ENCODE measurements at regions of chr6 and their contacts with region 1.

Region 1: DNA sequence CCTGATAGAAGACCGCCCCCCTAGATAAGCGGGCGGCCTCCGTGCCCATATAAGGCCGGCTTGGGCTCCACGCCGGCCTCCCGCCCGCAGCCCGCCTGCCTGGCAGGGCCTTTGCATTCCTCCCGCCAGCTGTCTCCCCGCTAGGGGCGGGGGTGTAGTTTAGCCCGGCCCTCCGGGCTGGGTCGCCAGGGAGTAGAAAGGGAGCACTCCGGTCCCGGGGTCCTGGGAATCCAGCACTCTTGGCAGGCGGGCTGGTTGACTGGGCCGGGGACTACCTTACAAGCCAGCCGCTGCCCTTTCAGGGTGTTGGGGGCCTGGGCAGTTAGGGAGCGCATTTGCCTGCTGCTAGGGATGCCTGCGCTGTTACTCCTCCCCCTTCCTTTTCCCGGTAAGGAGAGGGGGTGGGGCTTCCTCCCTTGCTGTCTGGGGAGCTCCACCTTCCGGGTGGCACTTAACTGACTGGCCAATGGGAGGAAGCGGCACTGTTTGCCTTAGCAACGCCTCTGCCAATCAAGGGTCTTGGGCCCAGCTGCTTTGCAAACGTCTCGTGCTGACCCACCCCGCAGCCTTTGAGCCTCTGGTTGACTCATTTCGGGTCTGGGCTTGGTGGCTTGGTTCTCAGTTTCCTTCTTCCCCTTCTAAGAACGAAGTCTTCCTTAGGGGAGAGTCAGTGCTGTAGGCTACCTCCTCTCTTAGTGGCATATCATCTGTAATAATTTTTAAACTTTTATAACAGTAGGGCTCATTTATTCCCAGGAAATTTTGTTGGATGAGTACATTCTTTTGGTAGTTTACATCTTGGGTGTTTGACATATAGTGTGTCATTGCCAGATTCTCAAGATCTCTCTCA is 3.4 kb downstream of the SRF start:
- DNase-seq: peak; percentile 88 to 99 (median 98)
- H3K4me3 ChIP-seq: peak overlapping the region; percentile 29 to 98 (median 81)
- H3K27ac ChIP-seq: peak overlapping the region; percentile 50 to 98 (median 90)
- H3K27me3 ChIP-seq: no peaks in the 10 kb centered on the region
- CTCF ChIP-seq: peak in 50 of 56 donors; percentile 8 to 67 (median 42)

Region 2: DNA sequence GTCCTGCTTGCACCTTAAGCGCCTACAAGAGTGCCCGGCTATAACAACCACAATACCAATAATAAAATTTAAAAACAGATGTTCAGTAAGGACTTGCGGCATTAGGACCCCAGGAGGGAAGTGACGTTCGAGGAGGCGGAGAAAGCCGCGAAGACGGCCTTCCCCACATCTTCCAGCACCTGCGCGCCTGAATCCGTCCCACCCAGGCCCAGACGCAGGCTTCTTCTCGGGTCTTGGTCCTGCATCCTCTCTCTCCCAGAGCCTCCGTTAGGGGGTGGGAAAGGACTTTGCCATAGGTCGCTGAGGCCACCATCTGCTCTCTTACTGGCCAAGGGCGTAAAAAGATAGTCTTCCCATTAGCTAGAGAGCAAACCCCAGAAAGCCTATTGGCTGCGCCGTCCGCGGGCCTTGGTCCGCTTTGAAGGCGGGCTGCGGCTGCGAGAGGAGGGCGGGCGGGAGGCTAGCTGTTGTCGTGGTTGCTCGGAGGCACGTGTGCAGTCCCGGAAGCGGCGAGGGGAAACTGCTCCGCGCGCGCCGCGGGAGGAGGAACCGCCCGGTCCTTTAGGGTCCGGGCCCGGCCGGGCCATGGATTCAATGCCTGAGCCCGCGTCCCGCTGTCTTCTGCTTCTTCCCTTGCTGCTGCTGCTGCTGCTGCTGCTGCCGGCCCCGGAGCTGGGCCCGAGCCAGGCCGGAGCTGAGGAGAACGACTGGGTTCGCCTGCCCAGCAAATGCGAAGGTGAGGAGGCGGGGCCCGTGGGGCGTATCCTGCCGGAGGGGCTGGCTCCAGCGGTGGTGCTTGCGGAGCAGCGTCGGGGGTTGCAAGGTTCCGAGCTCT is 245.3 kb before region 1 on chr6 and contains the start of gene CNPY3:
- intact Hi-C with region 1: loop called in 1 of 2 experiments (anchors 10 kb)
- DNase-seq: peak; percentile 79 to 96 (median 94)
- H3K4me3 ChIP-seq: peak within 1 kb of the TSS; percentile 65 to 98 (median 85)
- H3K27ac ChIP-seq: peak within 1 kb of the TSS; percentile 61 to 98 (median 93)
- H3K27me3 ChIP-seq: no peaks in the 10 kb centered on the region
- CTCF ChIP-seq: peak in 19 of 56 donors; percentile 6 to 52 (median 21)
- total RNA-seq, gene CNPY3: 33.3 to 56.8 (median 43.9) TPM

Region 3: DNA sequence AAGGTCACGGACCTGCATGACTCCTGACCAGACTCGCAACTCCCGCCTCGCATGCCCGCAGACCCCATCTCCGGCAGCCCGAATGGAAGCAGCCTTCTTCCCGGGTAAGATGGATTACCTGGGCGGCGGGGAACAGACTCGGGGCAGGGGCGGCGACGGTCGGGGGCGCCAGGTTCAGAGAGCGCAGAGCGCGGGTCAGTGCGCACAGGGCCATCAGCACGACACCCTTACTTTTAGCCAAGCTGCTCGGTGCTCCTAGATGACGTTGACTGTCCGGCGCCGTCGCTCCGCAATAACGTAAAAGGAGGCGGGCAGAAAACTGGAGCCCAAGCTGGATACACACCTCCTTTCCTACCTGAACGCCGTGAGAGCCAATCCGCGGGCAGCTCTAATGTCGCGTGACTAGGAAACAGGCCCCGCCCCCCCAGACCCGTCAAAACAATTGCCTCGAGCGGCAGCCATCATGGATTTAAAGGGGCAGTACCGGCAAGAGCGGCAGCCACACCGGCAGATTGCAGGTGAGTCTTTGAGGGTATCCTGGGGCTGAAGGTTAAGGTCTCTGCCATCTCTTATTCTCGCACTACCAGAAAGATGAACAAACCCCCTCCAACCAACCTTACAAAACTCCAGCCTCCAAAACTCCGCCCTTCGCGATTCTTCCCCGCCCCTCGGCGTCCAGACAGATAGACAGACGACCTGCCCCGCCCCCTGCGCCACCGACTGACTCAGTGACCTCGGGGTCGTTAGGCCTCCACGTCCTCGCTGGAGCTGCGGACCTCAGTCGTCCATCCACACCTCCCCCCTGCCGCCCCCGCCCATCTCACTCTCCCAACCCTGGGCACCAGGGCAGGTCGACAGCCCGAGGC is 115.1 kb before region 1 on chr6 and contains the starts of genes KLC4 and MRPL2:
- intact Hi-C with region 1: loop called (anchors 1 to 5 kb)
- DNase-seq: peak; percentile 98 to 100 (median 100)
- H3K4me3 ChIP-seq: peak within 1 kb of the TSS; percentile 61 to 100 (median 92)
- H3K27ac ChIP-seq: peak within 1 kb of the TSS in 58 of 59 donors; percentile 31 to 96 (median 87)
- H3K27me3 ChIP-seq: no peaks in the 10 kb centered on the region
- CTCF ChIP-seq: peak in 8 of 56 donors; percentile 5 to 34 (median 16)
- total RNA-seq, gene KLC4: 39.5 to 88.4 (median 59.1) TPM
- total RNA-seq, gene MRPL2: 30.1 to 96.7 (median 58.0) TPM

Region 4: DNA sequence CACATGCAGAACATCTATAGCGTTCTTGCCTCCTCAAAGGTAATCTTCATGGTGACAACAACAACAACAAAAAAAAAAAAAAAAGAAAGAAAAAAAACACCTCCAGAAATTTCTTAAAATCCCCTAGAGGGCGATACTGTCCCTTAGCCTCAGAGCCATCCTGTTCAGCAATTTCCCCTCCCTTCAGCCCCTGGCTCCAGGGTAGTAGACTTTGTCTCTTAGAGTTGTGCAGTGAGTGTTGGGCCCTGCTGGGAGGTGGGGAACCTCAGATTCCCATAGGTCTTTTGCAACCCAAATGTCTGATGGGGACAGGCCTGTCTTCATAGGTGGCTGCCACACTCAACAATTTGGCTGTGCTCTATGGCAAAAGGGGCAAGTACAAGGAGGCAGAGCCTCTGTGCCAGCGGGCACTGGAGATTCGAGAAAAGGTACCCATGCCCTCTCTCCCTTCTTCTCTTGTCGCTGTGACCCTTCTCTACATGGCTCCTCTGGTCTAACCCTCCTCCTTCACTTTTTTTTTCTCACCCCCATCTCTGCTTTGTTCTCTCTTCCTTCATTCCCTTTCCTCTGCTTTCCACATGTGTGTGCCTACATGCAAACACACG is 104.4 kb before region 1 on chr6:
- intact Hi-C with region 1: no loop called
- DNase-seq: no peak
- H3K4me3 ChIP-seq: no peak overlapping the region
- H3K27ac ChIP-seq: peak overlapping the region in 1 of 59 donors; percentile 1
- H3K27me3 ChIP-seq: no peaks in the 10 kb centered on the region
- CTCF ChIP-seq: peak in 54 of 56 donors; percentile 14 to 64 (median 47)

Region 5: DNA sequence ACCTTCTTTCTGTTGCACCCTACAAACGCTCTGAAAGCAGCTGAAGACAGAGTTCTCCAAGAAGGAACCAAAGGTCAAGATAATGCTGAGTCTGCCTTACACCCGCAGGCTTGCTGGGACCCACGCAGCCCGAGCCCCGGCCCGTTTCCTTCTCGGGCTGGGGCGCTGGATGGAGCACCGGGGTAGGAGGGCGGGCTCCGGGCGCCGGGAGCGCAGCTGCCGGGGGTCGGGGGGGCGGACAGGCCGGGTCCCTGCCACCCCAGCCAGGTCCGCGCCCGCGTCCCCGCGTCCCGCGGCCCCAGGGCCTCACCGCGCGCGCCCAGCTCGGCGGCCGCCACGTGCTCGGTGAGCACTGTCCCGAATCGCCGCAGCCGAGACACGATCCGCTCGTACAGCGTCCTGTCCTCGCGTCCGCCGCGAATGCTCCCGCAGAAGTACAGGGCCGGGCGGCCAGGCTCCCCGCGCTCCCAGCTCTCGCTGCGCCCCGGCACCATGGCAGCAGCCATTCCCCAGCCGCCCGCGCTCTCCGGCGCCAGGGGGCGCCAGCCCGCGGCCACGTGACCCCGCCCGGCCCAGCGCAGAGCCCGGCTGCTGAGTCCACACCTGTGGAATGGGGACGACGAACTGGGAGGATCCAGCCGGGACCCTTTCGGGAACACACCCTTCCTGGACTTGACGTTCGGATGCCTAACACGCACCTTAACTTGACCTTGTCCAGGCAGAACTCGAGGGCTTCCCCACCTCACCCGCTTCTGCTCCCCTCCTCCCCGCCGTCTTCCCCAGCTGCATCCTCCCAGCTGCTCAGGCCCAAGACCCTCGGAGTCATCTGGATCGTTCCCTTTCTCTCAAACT is 54.7 kb after region 1 on chr6 and contains the start of gene DNPH1:
- intact Hi-C with region 1: loop called in 1 of 2 experiments (anchors 2 kb)
- DNase-seq: peak; percentile 62 to 93 (median 73)
- H3K4me3 ChIP-seq: peak within 1 kb of the TSS; percentile 43 to 84 (median 72)
- H3K27ac ChIP-seq: peak within 1 kb of the TSS in 48 of 59 donors; percentile 0 to 83 (median 60)
- H3K27me3 ChIP-seq: no peaks in the 10 kb centered on the region
- CTCF ChIP-seq: peak; percentile 72 to 98 (median 94)
- total RNA-seq, gene DNPH1: 18.4 to 54.6 (median 31.2) TPM

Region 6: DNA sequence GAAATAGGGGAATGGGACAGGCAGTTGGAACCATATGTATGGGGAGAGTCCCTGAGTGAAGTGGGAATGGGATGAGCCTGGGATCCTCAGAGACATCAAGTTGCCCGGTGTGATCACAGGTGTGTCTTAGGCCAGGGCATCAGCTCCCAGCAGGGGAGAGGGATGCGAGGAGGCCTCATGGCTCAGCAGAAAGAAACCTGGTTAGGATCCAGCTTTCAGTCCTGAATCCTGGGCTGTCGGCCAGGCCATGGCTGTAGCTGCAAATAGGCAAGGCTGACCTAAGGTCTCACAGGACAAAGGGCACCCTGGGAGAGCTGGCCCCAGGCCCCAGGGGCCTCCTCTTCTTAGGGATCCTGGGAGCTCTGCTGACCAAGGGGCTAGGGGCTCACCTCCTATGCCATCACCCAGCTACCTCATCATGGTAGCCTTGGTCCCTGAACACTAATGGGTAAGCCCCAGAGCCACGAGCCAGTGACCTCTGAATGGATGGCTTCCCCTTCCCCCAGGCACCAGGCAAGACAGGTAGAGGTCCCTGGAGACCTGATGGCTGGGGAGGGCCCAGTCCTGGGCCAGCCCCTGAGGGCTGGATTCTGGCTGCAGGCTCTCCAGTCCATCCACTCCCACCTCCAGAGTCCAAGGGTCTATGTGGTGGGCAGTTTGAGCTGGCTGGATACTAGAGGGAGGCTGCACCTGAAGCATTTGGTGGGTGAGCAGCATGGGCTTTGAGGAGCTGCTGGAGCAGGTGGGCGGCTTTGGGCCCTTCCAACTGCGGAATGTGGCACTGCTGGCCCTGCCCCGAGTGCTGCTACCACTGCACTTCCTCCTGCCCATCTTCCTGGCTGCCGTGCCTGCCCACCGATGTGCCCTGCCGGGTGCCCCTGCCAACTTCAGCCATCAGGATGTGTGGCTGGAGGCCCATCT is 123.4 kb after region 1 on chr6 and contains the start of gene SLC22A7:
- intact Hi-C with region 1: no loop called
- DNase-seq: peak in 1 of 10 donors; percentile 10
- H3K4me3 ChIP-seq: no peak within 1 kb of the TSS
- H3K27ac ChIP-seq: no peak within 1 kb of the TSS
- H3K27me3 ChIP-seq: peaks cover 0 to 15% (median 0%) of the 10 kb centered on the region in 45 donors
- CTCF ChIP-seq: no peak
- total RNA-seq, gene SLC22A7: 0.16 to 2.8 (median 0.70) TPM in 82 of 120 experiments, not detected in the others

Region 7: DNA sequence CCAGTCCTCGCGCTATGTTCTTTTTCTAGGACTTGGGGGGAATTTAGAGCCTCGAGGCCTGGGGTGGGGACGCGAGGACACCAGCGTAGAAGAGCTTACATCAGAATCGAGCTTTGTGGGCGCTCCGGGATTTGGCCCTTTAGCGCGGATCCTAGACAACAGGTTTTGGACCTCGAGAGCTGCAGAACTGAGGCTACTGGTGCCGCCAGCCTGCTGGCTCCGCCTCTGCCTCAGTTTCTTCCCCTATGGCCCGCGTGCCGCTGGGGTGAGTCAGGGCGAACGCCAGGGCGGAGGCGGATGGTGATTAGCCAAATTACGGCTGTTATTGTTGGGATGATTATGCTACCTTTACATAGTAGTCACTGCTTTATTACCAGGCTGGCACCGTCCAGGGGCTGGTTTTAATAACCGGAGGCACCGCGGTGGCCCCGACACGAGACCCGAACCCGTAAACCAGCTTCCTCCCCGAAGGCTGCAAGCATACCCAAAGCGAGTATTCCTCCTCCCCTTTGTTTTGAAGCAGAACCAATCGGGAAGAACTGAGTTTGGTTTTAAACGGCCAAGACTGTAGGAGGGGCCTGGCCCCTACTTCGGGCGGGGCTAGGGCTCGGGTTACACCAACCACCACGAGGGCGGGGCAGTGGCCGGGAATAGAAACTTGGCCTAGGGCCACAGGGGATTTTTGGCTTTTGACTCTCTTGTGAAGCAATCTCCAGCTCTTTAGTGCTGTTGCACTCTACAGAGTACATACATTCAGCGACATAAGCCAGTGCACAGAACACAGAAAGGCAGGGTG is 455.2 kb after region 1 on chr6:
- intact Hi-C with region 1: loop called in 1 of 2 experiments (anchors 5 kb)
- DNase-seq: peak; percentile 61 to 93 (median 90)
- H3K4me3 ChIP-seq: peak overlapping the region; percentile 64 to 99 (median 94)
- H3K27ac ChIP-seq: peak overlapping the region; percentile 74 to 100 (median 97)
- H3K27me3 ChIP-seq: no peaks in the 10 kb centered on the region
- CTCF ChIP-seq: peak in 5 of 56 donors; percentile 0 to 9 (median 2)

Measured in dorsolateral prefrontal cortex (tissue), 120 donors.